Endothelial cell of umbilical vein (primary cell): ENCODE measurements at regions of chr16 and their contacts with region 1.

Region 1: GRCh38 chr16:29862884-29863668 is at the start of gene CDIPT:
- DNase-seq: peak; percentile 96
- H3K4me3 ChIP-seq: peak within 1 kb of the TSS; percentile 55 to 73 (median 64)
- H3K27ac ChIP-seq: peak within 1 kb of the TSS; percentile 100
- H3K4me1 ChIP-seq: peaks cover 7% of the 10 kb centered on the region
- H3K27me3 ChIP-seq: no peaks in the 10 kb centered on the region
- CTCF ChIP-seq: peak; percentile 53 to 85
- POLR2A ChIP-seq: peak; percentile 51
- total RNA-seq, gene CDIPT: 67.3 and 68.7 TPM in 2 replicates

Region 2: DNA sequence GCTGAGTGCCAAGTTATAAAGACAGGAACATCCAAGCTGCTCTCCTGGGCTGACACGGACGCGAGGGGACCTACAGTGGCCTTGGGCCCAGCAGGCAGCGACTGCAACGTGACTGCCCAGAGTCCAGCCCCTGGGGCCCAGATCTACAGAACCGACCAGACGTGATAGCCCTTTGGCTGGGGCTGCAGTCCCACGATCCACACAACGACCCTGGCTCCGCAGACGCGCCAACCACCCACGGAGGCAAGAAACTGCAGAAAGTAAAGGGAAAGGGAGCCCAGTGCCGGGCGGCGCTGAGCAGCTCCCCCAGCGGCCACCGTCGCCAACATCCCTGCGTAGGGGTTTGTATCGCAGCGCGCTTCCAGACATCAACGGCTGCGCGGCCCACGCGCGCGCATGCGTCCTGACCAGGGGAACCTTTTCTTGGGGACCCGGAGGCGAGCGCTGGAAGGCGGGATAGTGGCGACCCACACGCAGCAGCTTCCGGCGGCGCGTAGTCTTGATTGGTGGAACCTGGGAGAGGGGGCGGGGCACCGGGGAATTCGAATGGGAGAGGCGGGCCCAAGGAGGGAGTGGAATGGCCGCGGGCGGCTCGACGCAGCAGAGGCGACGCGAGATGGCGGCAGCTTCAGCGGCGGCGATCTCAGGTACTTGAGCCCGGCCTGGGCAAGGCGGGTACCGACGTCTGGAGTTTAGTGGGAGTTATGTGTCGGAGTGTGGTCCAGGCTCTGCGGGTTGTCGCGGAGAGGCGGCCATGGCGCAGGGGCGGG is 72.7 kb before region 1 on chr16 and contains the start of gene KIF22:
- CTCF ChIA-PET with region 1: interaction called, 3 read pairs
- POLR2A ChIA-PET with region 1: no interaction called
- dilution Hi-C with region 1: no loop called
- intact Hi-C with region 1: loop called (anchors 1 kb)
- DNase-seq: peak; percentile 99
- H3K4me3 ChIP-seq: peak within 1 kb of the TSS; percentile 80 to 93 (median 88)
- H3K27ac ChIP-seq: peak within 1 kb of the TSS; percentile 13
- H3K4me1 ChIP-seq: peaks cover 23% of the 10 kb centered on the region
- H3K27me3 ChIP-seq: no peaks in the 10 kb centered on the region
- CTCF ChIP-seq: peak; percentile 85 to 90
- POLR2A ChIP-seq: peak; percentile 70
- total RNA-seq, gene KIF22: 82.3 and 90.0 TPM in 2 replicates

Region 3: DNA sequence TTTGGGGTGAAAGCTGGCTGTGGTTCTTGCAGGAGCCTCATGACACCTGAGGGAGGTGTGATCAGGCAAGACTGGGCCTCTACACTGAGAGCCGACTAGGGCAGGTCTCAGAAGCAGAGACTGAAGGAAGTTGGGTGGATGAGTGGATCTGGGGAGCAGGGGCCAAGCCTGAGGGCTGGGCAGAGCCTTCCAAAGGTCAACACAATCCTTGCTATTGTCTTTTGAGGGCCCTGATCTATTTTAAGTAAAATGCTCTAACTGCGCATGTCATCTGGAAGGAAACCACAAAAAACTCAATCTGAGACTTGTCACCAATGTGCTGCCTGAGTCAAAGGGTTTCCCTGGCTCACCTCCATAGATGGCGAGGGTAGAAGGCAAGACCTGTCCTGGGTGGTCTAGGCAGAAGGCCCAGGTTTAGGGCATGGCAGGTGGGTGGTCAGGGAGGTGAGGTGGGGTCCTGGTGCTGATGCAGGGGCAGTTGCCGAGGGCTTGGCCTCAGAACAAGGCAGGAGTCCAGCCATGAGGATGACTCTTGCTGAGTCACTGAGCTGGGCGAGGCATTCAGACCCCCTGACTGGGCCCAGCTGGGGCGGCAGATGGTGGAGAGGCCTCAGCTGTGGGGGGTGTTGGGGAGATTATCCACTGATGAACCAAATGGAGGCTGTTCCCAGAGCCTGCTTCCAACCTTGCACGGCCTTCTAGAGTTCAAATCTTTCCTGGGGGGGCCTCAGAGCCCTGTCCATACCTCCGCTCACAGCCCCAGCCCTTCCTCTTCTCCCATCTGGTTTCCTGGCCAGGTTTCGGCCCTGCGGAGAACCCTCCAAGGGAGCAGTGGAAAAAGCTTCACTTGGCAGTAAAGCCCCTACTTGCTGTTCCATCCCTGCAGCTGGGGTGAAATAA is 37.7 kb before region 1 on chr16:
- CTCF ChIA-PET with region 1: interaction called, 3 read pairs
- POLR2A ChIA-PET with region 1: interaction called, 4 read pairs
- dilution Hi-C with region 1: no loop called
- intact Hi-C with region 1: loop called (anchors 1 kb)
- DNase-seq: peak; percentile 65
- H3K4me3 ChIP-seq: no peak overlapping the region
- H3K27ac ChIP-seq: peak overlapping the region; percentile 73
- H3K4me1 ChIP-seq: peaks cover 47% of the 10 kb centered on the region
- H3K27me3 ChIP-seq: no peaks in the 10 kb centered on the region
- CTCF ChIP-seq: no peak
- POLR2A ChIP-seq: no peak

Region 4: GRCh38 chr16:29961479-29962343 is 98.6 kb after region 1 on chr16 and contains the start of gene TMEM219:
- CTCF ChIA-PET with region 1: interaction called, 3 read pairs
- POLR2A ChIA-PET with region 1: no interaction called
- dilution Hi-C with region 1: no loop called
- intact Hi-C with region 1: loop called (anchors 1 kb)
- DNase-seq: peak; percentile 92
- H3K4me3 ChIP-seq: peak within 1 kb of the TSS; percentile 63 to 82 (median 76)
- H3K27ac ChIP-seq: peak within 1 kb of the TSS; percentile 70
- H3K4me1 ChIP-seq: peaks cover 15% of the 10 kb centered on the region
- H3K27me3 ChIP-seq: no peaks in the 10 kb centered on the region
- CTCF ChIP-seq: peak; percentile 27 to 43
- POLR2A ChIP-seq: no peak
- total RNA-seq, gene TMEM219: 99.4 and 110 TPM in 2 replicates

Region 5: GRCh38 chr16:29973384-29974246 is 110.5 kb after region 1 on chr16 and contains the start of gene TAOK2:
- CTCF ChIA-PET with region 1: interaction called, 3 read pairs
- POLR2A ChIA-PET with region 1: no interaction called
- dilution Hi-C with region 1: no loop called
- intact Hi-C with region 1: loop called (anchors 1 kb)
- DNase-seq: peak; percentile 100
- H3K4me3 ChIP-seq: peak within 1 kb of the TSS; percentile 79 to 95 (median 94)
- H3K27ac ChIP-seq: peak within 1 kb of the TSS; percentile 81
- H3K4me1 ChIP-seq: peaks cover 38% of the 10 kb centered on the region
- H3K27me3 ChIP-seq: no peaks in the 10 kb centered on the region
- CTCF ChIP-seq: no peak
- POLR2A ChIP-seq: peak; percentile 89
- total RNA-seq, gene TAOK2: 112 and 114 TPM in 2 replicates

Region 6: DNA sequence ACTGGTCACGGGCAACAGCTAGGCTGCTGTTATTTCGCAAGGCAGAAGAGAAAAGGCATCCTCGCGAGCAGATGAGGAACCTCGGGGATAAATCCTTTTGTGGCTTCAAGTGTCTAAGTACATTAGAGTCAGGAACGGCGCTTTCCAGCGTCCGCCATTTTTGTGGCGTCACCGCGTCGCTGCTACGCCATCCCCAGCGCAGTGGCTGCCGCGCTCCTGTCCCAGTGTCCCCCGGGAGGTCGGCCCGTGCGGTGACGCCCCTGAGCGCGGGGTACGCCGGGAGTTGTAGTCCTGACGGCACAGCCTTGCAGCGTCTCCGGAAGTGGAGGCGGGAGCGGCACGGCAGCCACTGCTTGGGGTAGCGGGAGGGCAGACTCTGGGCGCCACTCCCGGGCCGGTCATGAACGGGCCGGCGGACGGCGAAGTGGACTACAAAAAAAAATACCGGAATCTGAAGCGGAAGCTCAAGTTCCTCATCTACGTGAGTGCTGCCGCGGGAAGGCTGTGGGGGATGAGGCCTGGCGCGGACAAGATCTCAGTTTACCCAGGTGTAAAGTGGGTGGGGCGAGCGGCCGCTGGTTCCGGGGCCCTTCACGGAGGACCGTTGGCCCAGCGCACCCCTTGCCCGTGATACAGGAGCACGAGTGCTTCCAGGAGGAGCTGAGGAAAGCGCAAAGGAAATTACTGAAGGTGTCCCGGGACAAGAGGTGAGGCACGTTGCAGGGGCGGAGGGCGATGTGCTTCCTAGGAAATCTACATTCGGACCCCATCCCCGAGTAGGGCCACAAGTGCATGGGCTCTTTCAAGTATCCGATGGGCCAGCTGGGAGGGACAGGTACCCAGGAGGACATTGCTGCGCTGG is 133.1 kb after region 1 on chr16 and contains the start of gene INO80E:
- CTCF ChIA-PET with region 1: no interaction called
- POLR2A ChIA-PET with region 1: no interaction called
- dilution Hi-C with region 1: no loop called
- intact Hi-C with region 1: loop called (anchors 2 kb)
- DNase-seq: peak; percentile 95
- H3K4me3 ChIP-seq: peak within 1 kb of the TSS; percentile 70 to 81 (median 73)
- H3K27ac ChIP-seq: peak within 1 kb of the TSS; percentile 76
- H3K4me1 ChIP-seq: peaks cover 22% of the 10 kb centered on the region
- H3K27me3 ChIP-seq: no peaks in the 10 kb centered on the region
- CTCF ChIP-seq: no peak
- POLR2A ChIP-seq: no peak
- total RNA-seq, gene INO80E: 76.4 and 84.1 TPM in 2 replicates

Region 7: GRCh38 chr16:30018731-30019158 is 155.7 kb after region 1 on chr16:
- CTCF ChIA-PET with region 1: no interaction called
- POLR2A ChIA-PET with region 1: no interaction called
- dilution Hi-C with region 1: no loop called
- intact Hi-C with region 1: loop called (anchors 1 kb)
- DNase-seq: no peak
- H3K4me3 ChIP-seq: no peak overlapping the region
- H3K27ac ChIP-seq: no peak overlapping the region
- H3K4me1 ChIP-seq: no peaks in the 10 kb centered on the region
- H3K27me3 ChIP-seq: no peaks in the 10 kb centered on the region
- CTCF ChIP-seq: no peak
- POLR2A ChIP-seq: no peak